ENCODE measurements at regions of chr11 and their contacts with region 1.

Region 1: DNA sequence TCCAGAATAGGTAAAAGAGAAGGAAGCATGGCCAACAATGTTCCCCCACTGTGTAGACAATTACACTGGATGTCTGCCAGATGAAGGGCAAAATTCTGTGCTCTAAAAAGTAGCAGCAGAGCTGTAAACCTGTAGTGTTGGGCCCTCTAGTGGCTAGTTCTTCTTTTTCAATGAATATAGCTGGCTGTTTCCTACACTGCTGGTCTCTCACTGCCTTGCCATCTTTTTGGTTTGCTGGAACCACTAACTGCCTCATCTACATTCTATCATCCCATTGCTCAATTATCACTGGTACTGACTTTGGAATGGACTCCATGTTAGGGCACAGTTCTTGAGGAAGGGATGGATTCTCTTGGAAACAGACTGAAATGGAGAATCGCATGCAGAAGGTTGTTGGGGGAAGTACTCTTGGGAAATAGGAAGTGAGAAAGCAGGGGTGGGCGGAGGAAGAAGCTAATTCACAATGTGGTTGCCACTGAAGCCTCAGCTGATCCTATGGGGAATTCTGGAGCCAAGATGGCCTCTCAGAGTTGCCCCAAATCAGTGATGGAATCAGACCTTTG is 17.9 kb downstream of the KCNE3 start:
- DNase-seq: peak; percentile 63
- H3K4me3 ChIP-seq: no peak overlapping the region
- H3K27ac ChIP-seq: no peak overlapping the region
- H3K4me1 ChIP-seq: no peaks in the 10 kb centered on the region
- H3K27me3 ChIP-seq: no peaks in the 10 kb centered on the region
- CTCF ChIP-seq: peak; percentile 68

Region 2: DNA sequence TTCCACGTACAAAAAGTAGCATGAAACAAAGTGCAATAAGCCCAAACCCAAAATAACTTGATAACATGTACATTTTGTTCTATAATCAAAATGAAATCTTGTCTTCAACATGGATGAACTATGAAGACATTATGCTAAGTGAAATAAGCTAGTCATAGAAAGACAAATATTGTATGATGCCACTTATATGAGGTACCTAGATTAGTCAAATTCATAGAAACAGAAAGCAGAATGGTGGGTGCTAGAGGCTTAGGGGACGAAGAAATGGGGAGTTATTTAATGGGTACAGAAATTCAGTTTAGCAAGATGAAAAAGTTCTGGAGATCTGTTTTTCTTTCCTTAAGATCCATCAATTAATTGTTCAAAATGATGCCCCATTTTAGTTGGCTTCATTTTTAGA is 58.8 kb before region 1 on chr11:
- intact Hi-C with region 1: loop called (anchors 5 kb)
- DNase-seq: no peak
- H3K4me3 ChIP-seq: no peak overlapping the region
- H3K27ac ChIP-seq: no peak overlapping the region
- H3K4me1 ChIP-seq: no peaks in the 10 kb centered on the region
- H3K27me3 ChIP-seq: no peaks in the 10 kb centered on the region
- CTCF ChIP-seq: no peak

Region 3: DNA sequence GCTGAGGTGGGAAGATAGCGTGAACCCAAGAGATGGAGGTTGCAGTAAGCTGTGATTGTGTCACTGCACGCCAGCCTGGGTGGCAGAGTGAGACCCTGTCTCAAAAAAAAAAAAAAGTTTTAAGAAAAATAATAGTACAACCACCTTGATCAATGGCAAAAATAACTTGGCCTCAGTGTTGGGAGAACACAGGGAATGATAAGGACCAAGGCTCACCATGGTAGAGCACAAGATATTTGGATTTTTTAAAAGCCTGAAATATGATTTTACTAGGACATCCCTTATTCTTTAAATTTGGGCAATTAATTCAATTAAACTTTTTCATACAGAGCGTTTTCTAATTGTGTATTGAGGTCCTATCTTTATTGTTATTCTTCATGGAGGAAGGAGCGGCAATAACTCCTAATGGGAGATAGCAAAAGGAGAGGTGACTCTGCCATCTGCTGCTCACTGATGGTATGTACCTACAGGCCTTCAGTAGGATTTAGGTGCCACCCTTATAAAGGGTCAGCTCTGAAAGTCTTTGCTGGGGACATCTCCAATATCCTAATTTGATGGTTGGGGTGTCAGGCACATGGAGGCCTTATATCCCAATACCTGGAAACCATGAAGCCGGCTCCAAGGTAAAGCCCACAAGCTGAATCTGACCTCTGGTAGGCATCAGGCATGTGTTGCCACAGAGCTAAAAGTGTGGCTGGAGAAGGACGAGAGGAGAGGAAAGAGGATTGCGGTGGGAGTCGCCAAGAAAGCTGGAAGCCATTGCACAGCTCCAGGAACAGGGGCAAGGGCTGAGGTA is 121.0 kb after region 1 on chr11:
- intact Hi-C with region 1: loop called (anchors 2 kb)
- DNase-seq: peak; percentile 74
- H3K4me3 ChIP-seq: no peak overlapping the region
- H3K27ac ChIP-seq: no peak overlapping the region
- H3K4me1 ChIP-seq: no peaks in the 10 kb centered on the region
- H3K27me3 ChIP-seq: no peaks in the 10 kb centered on the region
- CTCF ChIP-seq: peak; percentile 54